ENCODE measurements at regions of chr10 and their contacts with region 1.

Region 1: DNA sequence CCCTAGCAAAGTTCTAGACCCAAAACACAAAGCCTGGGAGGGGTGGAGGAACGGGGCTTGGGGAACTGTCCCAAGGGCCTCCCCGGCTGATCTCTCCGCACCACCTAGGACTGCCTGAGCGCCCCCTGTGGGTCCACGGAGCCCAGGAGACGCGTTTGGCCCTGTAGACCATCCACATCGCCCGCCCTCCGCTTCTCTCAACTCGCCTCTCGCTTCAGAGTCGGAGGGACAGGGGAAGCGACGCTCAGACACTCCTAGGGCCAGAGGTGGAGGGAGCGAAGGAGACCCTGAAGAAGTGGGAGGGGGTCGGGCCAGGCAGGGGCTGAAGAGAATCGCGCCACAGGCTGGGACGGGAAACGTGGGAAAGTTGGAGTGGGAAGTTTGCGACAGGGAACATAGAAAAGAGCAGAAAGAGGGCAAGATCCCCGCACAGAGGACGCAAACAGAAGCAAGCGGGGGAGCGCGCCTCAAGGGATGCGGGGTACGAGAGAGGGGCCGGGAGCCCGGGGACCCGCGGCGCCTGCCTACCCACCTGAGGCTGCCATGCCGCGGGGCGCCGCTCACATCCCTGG is 378 bp downstream of the PIK3AP1 start:
- DNase-seq: peak; percentile 74 to 91 (median 80)
- ATAC-seq: peak; percentile 80 to 88 (median 82)
- H3K4me3 ChIP-seq: peak overlapping the region; percentile 40 to 72 (median 65)
- H3K27ac ChIP-seq: peak overlapping the region; percentile 52 to 89 (median 68)
- H3K4me1 ChIP-seq: peaks cover 0 to 18% (median 17%) of the 10 kb centered on the region in 3 donors
- H3K27me3 ChIP-seq: no peaks in the 10 kb centered on the region
- CTCF ChIP-seq: peak; percentile 25 to 48 (median 37)

Region 2: GRCh38 chr10:96636551-96636950 is 83.4 kb before region 1 on chr10:
- intact Hi-C with region 1: loop called in 1 of 3 experiments (anchors 5 kb)
- DNase-seq: no peak
- ATAC-seq: no peak
- H3K4me3 ChIP-seq: no peak overlapping the region
- H3K27ac ChIP-seq: no peak overlapping the region
- H3K4me1 ChIP-seq: peaks cover 3 to 13% (median 11%) of the 10 kb centered on the region in 3 donors
- H3K27me3 ChIP-seq: no peaks in the 10 kb centered on the region
- CTCF ChIP-seq: no peak

Region 3: DNA sequence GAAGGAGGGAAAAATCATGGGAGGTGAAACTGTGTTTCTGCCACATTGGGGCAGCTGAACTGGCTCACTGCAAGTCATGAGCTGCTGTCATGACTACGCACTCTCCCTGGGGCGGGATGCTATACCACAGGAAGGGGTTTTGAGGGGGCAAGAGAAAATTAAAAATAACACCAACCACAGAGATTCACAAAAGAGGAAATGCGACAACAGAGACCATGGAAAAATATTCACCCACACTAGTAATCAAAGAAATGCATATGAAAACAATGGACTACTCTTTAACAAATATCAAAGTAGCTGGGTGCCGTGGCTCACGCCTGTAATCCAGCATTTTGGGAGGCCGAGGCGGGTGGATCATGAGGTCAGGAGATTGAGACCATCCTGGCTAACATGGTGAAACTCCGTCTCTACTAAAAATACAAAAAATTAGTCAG is 67.9 kb before region 1 on chr10:
- intact Hi-C with region 1: loop called in 1 of 3 experiments (anchors 10 kb)
- DNase-seq: no peak
- ATAC-seq: peak in 2 of 4 donors; percentile 41 to 50
- H3K4me3 ChIP-seq: no peak overlapping the region
- H3K27ac ChIP-seq: no peak overlapping the region
- H3K4me1 ChIP-seq: no peaks in the 10 kb centered on the region
- H3K27me3 ChIP-seq: no peaks in the 10 kb centered on the region
- CTCF ChIP-seq: no peak

Region 4: GRCh38 chr10:97010695-97011206 is 290.8 kb after region 1 on chr10:
- intact Hi-C with region 1: no loop called
- DNase-seq: no peak
- ATAC-seq: no peak
- H3K4me3 ChIP-seq: no peak overlapping the region
- H3K27ac ChIP-seq: no peak overlapping the region
- H3K4me1 ChIP-seq: no peaks in the 10 kb centered on the region
- H3K27me3 ChIP-seq: no peaks in the 10 kb centered on the region
- CTCF ChIP-seq: no peak

Region 5: GRCh38 chr10:97069576-97070362 is 349.8 kb after region 1 on chr10:
- intact Hi-C with region 1: no loop called
- DNase-seq: no peak
- ATAC-seq: no peak
- H3K4me3 ChIP-seq: no peak overlapping the region
- H3K27ac ChIP-seq: no peak overlapping the region
- H3K4me1 ChIP-seq: no peaks in the 10 kb centered on the region
- H3K27me3 ChIP-seq: peaks cover 0 to 4% (median 0%) of the 10 kb centered on the region in 4 donors
- CTCF ChIP-seq: no peak

Measured in pancreas (tissue), 10 donors.